Sigmoid colon (tissue), 7 donors: ENCODE measurements at regions of chr9 and their contacts with region 1.

Region 1: GRCh38 chr9:107243751-107244150 is 39.3 kb upstream of the RAD23B start:
- DNase-seq: no peak
- H3K4me3 ChIP-seq: no peak overlapping the region
- H3K27ac ChIP-seq: no peak overlapping the region
- H3K4me1 ChIP-seq: peaks cover 0 to 6% (median 0%) of the 10 kb centered on the region in 4 donors
- H3K27me3 ChIP-seq: no peaks in the 10 kb centered on the region
- CTCF ChIP-seq: no peak
- EP300 ChIP-seq: no peak
- POLR2A ChIP-seq: no peak

Region 2: DNA sequence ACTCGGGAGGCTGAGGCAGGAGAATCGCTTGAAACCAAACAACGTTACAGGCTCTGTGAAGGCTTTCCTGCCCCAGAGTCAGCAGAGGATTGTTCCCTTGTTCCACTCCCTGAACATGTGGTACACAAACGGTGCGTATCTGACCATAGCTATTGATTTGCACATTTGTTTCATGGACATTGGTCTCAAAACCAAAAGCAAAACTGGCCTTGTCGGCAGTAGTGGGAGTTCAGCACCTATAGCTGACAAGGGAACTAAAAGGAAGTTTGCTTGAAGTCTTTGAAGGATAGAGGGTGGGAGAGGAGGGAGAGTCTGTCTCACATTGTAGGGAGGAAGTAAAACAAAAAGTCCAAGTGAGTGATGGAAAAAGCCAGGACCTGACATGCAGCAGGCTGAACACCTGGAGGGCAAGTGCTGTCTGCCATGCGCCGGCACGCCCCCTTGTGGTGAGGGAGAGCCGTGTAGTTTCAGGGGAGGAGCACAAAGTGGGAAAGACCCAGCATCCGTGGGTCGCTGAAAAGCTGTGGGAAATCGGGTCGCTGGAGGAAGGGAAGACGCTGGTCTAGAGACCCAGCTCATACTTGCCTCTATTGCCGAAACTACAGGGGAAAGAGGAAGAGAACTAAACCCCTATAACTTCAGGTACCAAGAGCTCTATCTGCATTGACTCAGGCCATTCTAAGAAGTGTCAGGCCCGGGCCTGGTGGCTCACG is 97.3 kb after region 1 on chr9:
- intact Hi-C with region 1: loop called (anchors 5 kb)
- DNase-seq: peak; percentile 83
- H3K4me3 ChIP-seq: no peak overlapping the region
- H3K27ac ChIP-seq: no peak overlapping the region
- H3K4me1 ChIP-seq: peaks cover 0 to 13% (median 3%) of the 10 kb centered on the region in 4 donors
- H3K27me3 ChIP-seq: no peaks in the 10 kb centered on the region
- CTCF ChIP-seq: peak; percentile 65 to 91 (median 80)
- EP300 ChIP-seq: no peak
- POLR2A ChIP-seq: no peak

Region 3: GRCh38 chr9:107351382-107352045 is 107.8 kb after region 1 on chr9:
- intact Hi-C with region 1: no loop called
- DNase-seq: no peak
- H3K4me3 ChIP-seq: no peak overlapping the region
- H3K27ac ChIP-seq: no peak overlapping the region
- H3K4me1 ChIP-seq: no peaks in the 10 kb centered on the region
- H3K27me3 ChIP-seq: no peaks in the 10 kb centered on the region
- CTCF ChIP-seq: no peak
- EP300 ChIP-seq: no peak
- POLR2A ChIP-seq: no peak